Heart left ventricle (tissue), 16 donors: ENCODE measurements at regions of chr6 and their contacts with region 1.

Region 1: GRCh38 chr6:143940011-143940597 is 68.0 kb downstream of the PLAGL1 start:
- DNase-seq: no peak
- ATAC-seq: no peak
- H3K4me3 ChIP-seq: no peak overlapping the region
- H3K27ac ChIP-seq: peak overlapping the region in 1 of 12 donors; percentile 0
- H3K4me1 ChIP-seq: peaks cover 0 to 17% (median 0%) of the 10 kb centered on the region in 12 donors
- H3K27me3 ChIP-seq: no peaks in the 10 kb centered on the region
- CTCF ChIP-seq: peak; percentile 31 to 65 (median 52)
- POLR2A ChIP-seq: no peak

Region 2: DNA sequence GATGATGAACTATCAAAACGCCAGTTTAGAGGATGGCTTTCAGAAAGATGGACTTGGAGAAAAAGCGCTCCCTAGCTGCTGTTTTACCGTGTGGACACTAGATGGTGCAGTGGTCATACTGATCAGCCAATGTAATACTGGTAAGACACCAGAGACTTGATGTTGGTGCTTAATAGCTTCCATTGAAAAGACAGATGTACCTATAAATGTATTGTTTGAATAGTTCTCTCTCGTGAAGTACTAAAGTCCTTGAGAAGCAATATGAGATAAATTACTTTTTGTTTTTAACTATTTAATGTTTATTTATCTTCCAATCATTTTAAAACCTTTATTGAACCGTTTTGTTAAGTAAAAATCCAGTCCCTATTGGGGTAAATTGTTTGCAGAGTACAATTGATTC is 364.7 kb before region 1 on chr6:
- intact Hi-C with region 1: loop called in 1 of 10 experiments (anchors 5 kb)
- DNase-seq: peak in 2 of 5 donors; percentile 57 to 60
- ATAC-seq: peak; percentile 55 to 91 (median 88)
- H3K4me3 ChIP-seq: no peak overlapping the region
- H3K27ac ChIP-seq: peak overlapping the region in 3 of 12 donors; percentile 35 to 60 (median 49)
- H3K4me1 ChIP-seq: peaks cover 0 to 5% (median 0%) of the 10 kb centered on the region in 12 donors
- H3K27me3 ChIP-seq: no peaks in the 10 kb centered on the region
- CTCF ChIP-seq: peak; percentile 80 to 96 (median 92)
- POLR2A ChIP-seq: no peak

Region 3: DNA sequence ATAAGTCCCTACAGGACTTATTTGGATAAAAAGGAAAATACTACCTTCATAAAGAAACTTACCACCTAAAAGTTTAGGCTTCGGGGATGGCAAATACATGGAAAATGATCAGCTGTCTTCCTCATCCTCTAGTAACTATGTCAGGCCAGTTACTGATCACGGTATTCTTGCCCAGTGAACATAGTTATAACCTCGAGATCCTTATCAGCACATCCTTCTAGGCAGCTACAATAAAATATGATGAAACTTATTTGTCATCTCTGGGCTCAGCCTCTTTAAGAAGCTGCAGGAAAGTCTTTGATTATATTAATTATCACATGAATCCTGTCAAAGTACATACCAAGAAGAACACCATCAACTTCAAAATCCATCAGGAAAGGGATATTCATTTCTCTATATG is 113.5 kb after region 1 on chr6:
- intact Hi-C with region 1: no loop called
- DNase-seq: no peak
- ATAC-seq: no peak
- H3K4me3 ChIP-seq: no peak overlapping the region
- H3K27ac ChIP-seq: no peak overlapping the region
- H3K4me1 ChIP-seq: peaks cover 0 to 6% (median 0%) of the 10 kb centered on the region in 12 donors
- H3K27me3 ChIP-seq: peaks cover 0 to under 1% (median 0%) of the 10 kb centered on the region in 9 donors
- CTCF ChIP-seq: no peak
- POLR2A ChIP-seq: no peak